ENCODE measurements at regions of chr11 and their contacts with region 1.

Region 1: GRCh38 chr11:44934735-44935250 is 15.9 kb downstream of the TP53I11 start:
- DNase-seq: no peak
- H3K4me3 ChIP-seq: no peak overlapping the region
- H3K27ac ChIP-seq: no peak overlapping the region
- H3K4me1 ChIP-seq: no peaks in the 10 kb centered on the region
- H3K27me3 ChIP-seq: no peaks in the 10 kb centered on the region
- CTCF ChIP-seq: no peak
- POLR2A ChIP-seq: no peak

Region 2: DNA sequence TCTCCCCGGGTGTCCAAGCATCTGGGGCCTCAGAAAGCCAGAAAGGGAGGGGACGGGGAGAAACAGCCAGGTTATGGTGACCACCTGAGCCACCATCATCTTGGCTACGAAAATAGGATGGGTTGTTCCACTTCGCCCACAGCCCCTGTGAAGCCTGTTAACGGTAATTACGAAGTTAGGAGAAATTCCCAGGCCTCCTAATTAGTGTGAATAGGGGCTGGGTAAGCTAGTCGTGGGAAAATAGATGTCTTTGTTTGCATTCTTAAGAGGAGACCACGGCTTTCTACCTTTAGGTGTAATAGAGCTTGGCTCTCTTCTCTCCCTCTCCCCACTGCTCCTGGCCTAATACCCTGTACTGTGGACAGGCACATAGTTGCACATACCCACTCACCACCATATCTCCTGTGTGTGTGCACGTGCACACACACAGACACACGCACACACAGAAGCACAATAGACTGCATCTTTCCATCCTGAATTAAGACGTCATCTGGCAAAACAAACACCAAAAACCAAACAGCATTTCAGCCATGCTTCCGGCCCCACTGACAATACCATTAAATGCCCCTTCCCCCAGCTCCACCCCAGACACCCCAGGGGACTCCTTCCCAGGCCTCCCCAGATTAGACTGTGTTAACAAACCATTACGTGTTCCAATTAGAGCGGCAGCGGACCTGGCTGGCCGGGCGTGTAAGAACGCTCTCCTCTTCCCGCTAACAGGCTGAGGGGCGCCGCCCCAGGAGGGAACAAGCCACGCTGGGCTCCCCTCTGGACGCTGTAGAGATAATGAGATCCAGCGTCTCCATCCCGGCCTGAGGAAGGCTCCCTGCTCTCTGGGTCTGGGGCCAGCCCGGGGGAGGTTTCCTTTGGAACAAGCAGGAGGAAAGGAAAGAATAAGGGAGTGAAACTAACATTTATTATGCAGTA is 57.0 kb before region 1 on chr11:
- intact Hi-C with region 1: no loop called
- DNase-seq: peak; percentile 61 to 70
- H3K4me3 ChIP-seq: no peak overlapping the region
- H3K27ac ChIP-seq: peak overlapping the region; percentile 80 to 83
- H3K4me1 ChIP-seq: no peaks in the 10 kb centered on the region
- H3K27me3 ChIP-seq: no peaks in the 10 kb centered on the region
- CTCF ChIP-seq: no peak
- POLR2A ChIP-seq: no peak

Region 3: GRCh38 chr11:45105233-45105983 is 170.6 kb after region 1 on chr11:
- intact Hi-C with region 1: loop called (anchors 2 kb)
- DNase-seq: peak; percentile 68 to 69
- H3K4me3 ChIP-seq: no peak overlapping the region
- H3K27ac ChIP-seq: no peak overlapping the region
- H3K4me1 ChIP-seq: no peaks in the 10 kb centered on the region
- H3K27me3 ChIP-seq: no peaks in the 10 kb centered on the region
- CTCF ChIP-seq: peak; percentile 81 to 96 (median 89)
- POLR2A ChIP-seq: no peak